ENCODE measurements at regions of chr1 and their contacts with region 1.

Region 1: DNA sequence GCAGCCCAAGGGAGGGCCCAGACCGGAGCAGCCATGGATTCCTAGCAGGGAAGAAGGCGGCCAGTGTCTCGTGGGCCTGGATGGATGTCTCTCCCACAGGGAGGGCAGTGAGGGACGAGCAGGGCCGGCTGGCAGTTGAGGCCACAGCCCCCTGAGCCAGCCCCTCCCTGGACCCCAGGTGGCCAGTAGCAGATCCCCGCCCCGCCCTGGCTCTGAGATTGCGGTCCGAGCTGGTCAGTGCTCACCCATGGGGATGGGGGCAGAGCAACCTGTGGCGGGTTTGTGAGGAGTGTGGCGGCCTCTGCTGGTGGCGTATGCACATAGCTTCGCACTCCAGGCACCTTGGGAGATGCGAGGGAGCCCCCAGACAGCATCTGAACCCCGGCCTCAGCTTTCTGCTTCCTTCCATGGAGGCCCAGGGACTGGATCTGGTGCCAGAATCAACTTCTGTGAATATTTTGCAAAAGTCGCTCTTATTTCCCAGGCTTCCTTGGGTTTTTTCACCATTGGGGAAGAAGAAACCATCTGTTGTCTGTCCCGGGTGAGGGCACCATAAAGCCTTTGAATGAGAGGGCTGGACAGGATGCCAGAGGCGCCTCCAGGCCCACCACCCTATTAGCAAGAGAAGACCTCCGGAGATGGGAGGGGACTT is 8.4 kb upstream of the KCNN3 start:
- DNase-seq: peak; percentile 77
- H3K27ac ChIP-seq: no peak overlapping the region
- CTCF ChIP-seq: peak; percentile 88

Region 2: GRCh38 chr1:154669464-154670282 is 208.8 kb before region 1 on chr1:
- CTCF ChIA-PET with region 1: interaction called, 27 read pairs
- POLR2A ChIA-PET with region 1: no interaction called
- DNase-seq: peak; percentile 83
- H3K27ac ChIP-seq: no peak overlapping the region
- CTCF ChIP-seq: peak; percentile 82

Region 3: DNA sequence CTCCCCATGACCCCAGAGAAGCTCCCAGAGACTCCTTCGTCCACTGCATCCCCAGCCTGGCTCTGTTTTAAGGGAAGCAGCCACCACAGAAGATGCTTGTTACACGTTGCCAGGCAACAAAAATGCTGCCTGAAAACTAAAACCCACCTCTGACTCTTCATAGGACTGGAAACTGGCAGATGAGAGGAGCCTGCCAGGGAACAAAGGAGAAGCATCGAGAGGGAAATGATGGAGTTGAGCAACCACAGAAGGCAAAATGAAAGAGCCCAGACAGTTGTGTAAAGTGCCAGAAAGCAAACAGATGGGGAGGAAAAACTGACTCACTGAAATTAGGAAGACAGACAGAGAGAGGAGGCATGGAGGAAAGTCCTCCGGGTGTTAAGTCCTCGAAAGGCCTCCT is 126.8 kb before region 1 on chr1:
- CTCF ChIA-PET with region 1: interaction called, 10 read pairs
- POLR2A ChIA-PET with region 1: no interaction called
- DNase-seq: no peak
- H3K27ac ChIP-seq: no peak overlapping the region
- CTCF ChIP-seq: no peak

Region 4: GRCh38 chr1:154821083-154821482 is 57.4 kb before region 1 on chr1:
- CTCF ChIA-PET with region 1: no interaction called
- POLR2A ChIA-PET with region 1: no interaction called
- DNase-seq: no peak
- H3K27ac ChIP-seq: no peak overlapping the region
- CTCF ChIP-seq: no peak